PC-9 (cell line): ENCODE measurements at regions of chr6 and their contacts with region 1.

Region 1: DNA sequence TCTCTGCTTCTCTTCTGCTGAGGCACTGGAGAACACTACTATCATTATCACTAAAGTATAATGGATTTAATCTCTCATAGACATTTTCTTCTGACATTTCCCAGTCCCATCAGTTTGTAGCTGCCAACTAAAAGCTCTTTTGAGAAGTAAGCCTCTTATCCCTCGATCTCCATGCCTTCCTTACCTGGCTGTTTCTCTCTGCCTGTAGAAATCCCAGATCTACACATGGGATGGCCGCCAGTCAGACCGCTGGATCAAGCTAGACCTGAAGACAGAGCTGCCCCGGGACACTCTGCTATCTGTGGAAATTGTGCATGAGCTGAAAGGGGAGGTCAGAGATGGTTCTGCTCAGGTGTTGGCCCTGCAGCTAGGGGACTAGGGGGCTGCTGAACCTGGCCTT is 25.4 kb downstream of the CCDC167 start:
- DNase-seq: no peak
- H3K4me3 ChIP-seq: no peak overlapping the region
- H3K27ac ChIP-seq: no peak overlapping the region
- H3K4me1 ChIP-seq: no peaks in the 10 kb centered on the region
- H3K27me3 ChIP-seq: no peaks in the 10 kb centered on the region
- CTCF ChIP-seq: no peak

Region 2: GRCh38 chr6:37456816-37457560 is 17.3 kb before region 1 on chr6:
- CTCF ChIA-PET with region 1: no interaction called
- POLR2A ChIA-PET with region 1: no interaction called
- intact Hi-C with region 1: no loop called
- DNase-seq: no peak
- H3K4me3 ChIP-seq: no peak overlapping the region
- H3K27ac ChIP-seq: no peak overlapping the region
- H3K4me1 ChIP-seq: no peaks in the 10 kb centered on the region
- H3K27me3 ChIP-seq: no peaks in the 10 kb centered on the region
- CTCF ChIP-seq: no peak

Region 3: GRCh38 chr6:37501632-37502491 is 27.5 kb after region 1 on chr6:
- CTCF ChIA-PET with region 1: no interaction called
- POLR2A ChIA-PET with region 1: interaction called, 10 read pairs
- intact Hi-C with region 1: no loop called
- DNase-seq: no peak
- H3K4me3 ChIP-seq: no peak overlapping the region
- H3K27ac ChIP-seq: no peak overlapping the region
- H3K4me1 ChIP-seq: 0 out of 2 replicates have a peak, but pooled peaks cover 6% of the 10 kb centered on the region
- H3K27me3 ChIP-seq: no peaks in the 10 kb centered on the region; the same call in 1 of the 2 replicates
- CTCF ChIP-seq: no peak